GM12878 (cell line): ENCODE measurements at regions of chr9 and their contacts with region 1.

Region 1: DNA sequence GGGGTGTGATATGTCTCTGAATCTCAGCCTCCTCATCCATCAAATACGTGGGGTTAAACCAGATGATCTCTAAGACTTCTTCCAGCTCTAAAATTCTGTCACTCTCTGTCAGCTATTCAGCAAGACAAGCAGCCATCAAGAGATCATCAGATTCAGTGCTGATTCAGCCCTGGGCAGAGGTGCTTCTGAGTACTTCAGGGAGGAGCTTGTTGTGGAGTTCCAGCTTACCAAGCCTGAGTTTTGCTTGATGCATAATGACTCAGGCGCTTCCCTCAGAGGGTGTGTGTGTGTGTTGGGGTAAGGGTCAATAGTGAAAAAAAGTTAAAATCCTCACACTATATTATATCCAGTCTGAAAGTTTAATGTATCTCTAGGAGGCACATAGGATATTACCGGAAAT is 29.6 kb upstream of the TAF1L start:
- DNase-seq: no peak
- ATAC-seq: no peak
- H3K4me3 ChIP-seq: no peak overlapping the region
- H3K27ac ChIP-seq: no peak overlapping the region
- H3K4me1 ChIP-seq: no peaks in the 10 kb centered on the region
- H3K27me3 ChIP-seq: no peaks in the 10 kb centered on the region
- CTCF ChIP-seq: no peak
- EP300 ChIP-seq: no peak
- POLR2A ChIP-seq: no peak
- RAD21 ChIP-seq: no peak

Region 2: DNA sequence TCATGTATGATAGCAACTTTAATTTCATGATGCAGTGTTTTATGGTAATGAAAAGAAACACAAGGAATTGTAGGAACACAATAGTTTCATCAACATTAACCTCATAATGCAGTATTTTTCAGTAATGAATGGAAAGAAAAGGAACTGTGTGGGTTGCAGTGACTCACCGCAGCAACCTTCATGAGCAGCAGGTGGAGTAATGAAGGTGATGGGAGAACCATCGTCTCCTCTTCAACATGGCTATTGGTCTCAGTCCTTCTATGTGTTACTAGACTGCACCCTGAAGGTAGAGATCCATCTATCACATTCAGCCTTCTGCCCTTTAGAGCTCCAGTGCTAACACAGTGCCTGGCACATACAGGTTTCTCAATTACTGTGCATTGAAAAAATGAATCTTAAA is 176.2 kb after region 1 on chr9:
- CTCF ChIA-PET with region 1: no interaction called
- POLR2A ChIA-PET with region 1: interaction called, 10 read pairs
- RAD21 ChIA-PET with region 1: no interaction called
- SMC1A ChIA-PET with region 1: no interaction called
- in situ Hi-C with region 1: no loop called
- intact Hi-C with region 1: no loop called
- DNase-seq: no peak
- ATAC-seq: no peak
- H3K4me3 ChIP-seq: no peak overlapping the region
- H3K27ac ChIP-seq: no peak overlapping the region
- H3K4me1 ChIP-seq: no peaks in the 10 kb centered on the region
- H3K27me3 ChIP-seq: no peaks in the 10 kb centered on the region
- CTCF ChIP-seq: no peak
- EP300 ChIP-seq: no peak
- POLR2A ChIP-seq: no peak
- RAD21 ChIP-seq: no peak